ENCODE measurements at regions of chr3 and their contacts with region 1.

Region 1: DNA sequence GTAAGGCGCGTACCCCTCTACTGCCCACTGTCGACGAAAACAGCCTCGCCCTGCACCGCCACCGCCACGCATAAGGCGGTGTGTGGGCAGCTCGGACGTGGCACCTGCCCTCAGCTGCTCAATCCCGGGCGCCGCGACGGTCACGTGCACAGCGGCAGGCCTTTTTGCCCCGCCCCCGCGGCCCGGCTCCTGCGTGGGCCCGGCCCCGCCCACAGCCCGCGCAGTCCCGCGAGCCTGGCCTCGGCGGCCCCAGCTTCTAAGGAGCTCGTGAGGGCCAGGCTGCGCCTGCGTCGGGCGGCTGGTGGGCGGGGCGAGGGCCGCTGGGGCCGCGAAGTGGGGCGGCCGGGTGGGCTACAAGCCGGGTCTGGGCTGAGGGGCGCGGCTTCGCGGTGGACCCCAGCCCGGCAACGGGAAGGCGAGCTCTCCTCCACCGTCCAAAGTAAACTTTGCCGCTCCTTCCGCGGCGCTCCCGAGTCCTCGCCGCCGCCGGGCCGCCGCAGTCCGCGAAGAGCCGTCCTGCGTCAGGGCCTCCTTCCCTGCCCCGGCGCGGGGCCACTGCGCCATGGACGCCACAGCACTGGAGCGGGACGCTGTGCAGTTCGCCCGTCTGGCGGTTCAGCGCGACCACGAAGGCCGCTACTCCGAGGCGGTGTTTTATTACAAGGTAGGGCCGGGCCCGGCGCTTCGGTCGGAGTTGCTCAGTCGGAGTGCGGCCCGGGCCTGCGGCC is at the start of gene CAPN7:
- DNase-seq: peak; percentile 90 to 96
- ATAC-seq: peak; percentile 83 to 84
- H3K4me3 ChIP-seq: peak within 1 kb of the TSS; percentile 81 to 93 (median 88)
- H3K27ac ChIP-seq: peak within 1 kb of the TSS; percentile 97 to 99 (median 98)
- H3K4me1 ChIP-seq: peaks cover 15 to 23% of the 10 kb centered on the region in 2 donors
- H3K27me3 ChIP-seq: no peaks in the 10 kb centered on the region
- CTCF ChIP-seq: peak; percentile 27 to 66 (median 60)
- POLR2A ChIP-seq: peak; percentile 99
- total RNA-seq, gene CAPN7: 33.8 to 153 (median 69.7) TPM

Region 2: DNA sequence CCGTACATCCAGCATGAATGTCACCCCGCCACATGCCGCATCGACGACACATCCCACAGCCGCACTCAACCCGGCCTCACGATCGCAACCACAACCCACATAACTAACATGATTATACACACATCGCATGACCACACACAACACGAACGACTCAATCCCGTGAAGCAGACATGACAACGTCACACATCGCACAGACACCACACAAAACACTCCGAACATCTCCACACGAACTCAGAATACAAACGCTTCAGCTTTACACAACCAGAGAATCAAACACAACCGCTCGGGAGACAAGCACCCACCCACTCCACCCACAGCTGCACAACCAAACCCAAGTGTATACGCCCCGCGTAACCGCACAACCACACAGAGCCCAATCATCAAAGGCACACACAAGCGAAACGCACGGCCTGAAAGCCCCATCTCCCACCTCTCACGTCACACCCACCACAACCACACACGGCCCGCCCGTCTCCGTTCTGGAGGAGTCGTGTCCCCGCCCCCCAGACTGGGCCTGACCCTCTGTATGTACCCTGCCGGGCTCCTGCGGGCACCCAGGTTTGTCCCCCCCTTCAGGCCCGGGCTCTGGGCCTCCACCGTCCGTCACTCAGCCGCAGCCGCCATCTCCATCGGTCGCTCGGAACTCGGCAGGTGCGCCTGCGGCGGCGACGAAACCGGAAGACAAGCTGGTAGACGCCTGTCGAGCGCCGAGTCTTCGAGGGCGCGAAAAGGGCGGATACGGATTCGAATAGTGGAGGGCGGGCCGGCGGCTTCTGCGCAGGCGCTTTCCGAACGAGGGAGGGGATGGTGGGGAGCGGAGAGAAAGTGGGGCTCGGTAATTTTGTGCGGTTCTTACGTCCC is 107.4 kb before region 1 on chr3 and contains the start of gene RBSN:
- in situ Hi-C with region 1: no loop called
- intact Hi-C with region 1: loop called (anchors 1 kb)
- DNase-seq: peak; percentile 92 to 93
- ATAC-seq: peak; percentile 55 to 69
- H3K4me3 ChIP-seq: peak within 1 kb of the TSS; percentile 62 to 99 (median 93)
- H3K27ac ChIP-seq: peak within 1 kb of the TSS; percentile 87 to 96 (median 88)
- H3K4me1 ChIP-seq: peaks cover 36 to 40% of the 10 kb centered on the region in 2 donors
- H3K27me3 ChIP-seq: no peaks in the 10 kb centered on the region
- CTCF ChIP-seq: no peak
- POLR2A ChIP-seq: peak; percentile 86 to 94
- total RNA-seq, gene RBSN: 26.8 to 42.6 (median 28.6) TPM

Region 3: DNA sequence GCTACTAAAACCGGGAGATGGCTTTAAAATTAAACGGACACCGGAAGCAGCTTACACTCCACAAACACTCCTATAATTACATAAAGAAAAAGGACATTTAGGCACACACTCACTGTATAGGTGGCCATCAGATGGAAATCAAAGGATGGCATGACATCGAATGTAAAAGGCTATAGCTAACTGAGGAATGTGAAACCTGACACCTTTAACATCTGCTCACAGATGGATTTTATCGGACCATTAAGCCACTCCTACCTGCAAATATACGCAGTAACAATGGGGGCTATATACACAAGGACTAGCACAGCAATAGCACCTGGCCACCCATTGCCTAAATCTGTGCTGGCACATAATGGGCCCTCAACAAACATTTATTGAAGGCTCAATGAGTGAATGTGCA is 92.6 kb before region 1 on chr3:
- in situ Hi-C with region 1: loop called in 2 of 4 experiments (anchors 5 kb)
- intact Hi-C with region 1: no loop called
- DNase-seq: no peak
- ATAC-seq: no peak
- H3K4me3 ChIP-seq: no peak overlapping the region
- H3K27ac ChIP-seq: no peak overlapping the region
- H3K4me1 ChIP-seq: peaks cover 4 to 8% of the 10 kb centered on the region in 2 donors
- H3K27me3 ChIP-seq: no peaks in the 10 kb centered on the region
- CTCF ChIP-seq: no peak
- POLR2A ChIP-seq: no peak

Region 4: GRCh38 chr3:15332405-15333098 is 126.5 kb after region 1 on chr3 and contains the start of gene SH3BP5:
- in situ Hi-C with region 1: no loop called
- intact Hi-C with region 1: loop called (anchors 2 kb)
- DNase-seq: peak; percentile 52 to 66
- ATAC-seq: peak; percentile 63 to 66
- H3K4me3 ChIP-seq: peak within 1 kb of the TSS; percentile 92 to 97 (median 93)
- H3K27ac ChIP-seq: peak within 1 kb of the TSS; percentile 88 to 93 (median 91)
- H3K4me1 ChIP-seq: peaks cover 38 to 40% of the 10 kb centered on the region in 2 donors
- H3K27me3 ChIP-seq: no peaks in the 10 kb centered on the region
- CTCF ChIP-seq: peak; percentile 73 to 95 (median 91)
- POLR2A ChIP-seq: peak; percentile 89 to 91
- total RNA-seq, gene SH3BP5: 31.5 to 111 (median 75.5) TPM

Region 5: GRCh38 chr3:15405448-15406050 is 199.5 kb after region 1 on chr3:
- in situ Hi-C with region 1: loop called in 3 of 4 experiments (anchors 5 to 10 kb)
- intact Hi-C with region 1: loop called (anchors 1 kb)
- DNase-seq: no peak
- ATAC-seq: peak; percentile 49 to 70
- H3K4me3 ChIP-seq: no peak overlapping the region
- H3K27ac ChIP-seq: no peak overlapping the region
- H3K4me1 ChIP-seq: no peaks in the 10 kb centered on the region
- H3K27me3 ChIP-seq: no peaks in the 10 kb centered on the region
- CTCF ChIP-seq: peak; percentile 29 to 66 (median 44)
- POLR2A ChIP-seq: no peak

Region 6: DNA sequence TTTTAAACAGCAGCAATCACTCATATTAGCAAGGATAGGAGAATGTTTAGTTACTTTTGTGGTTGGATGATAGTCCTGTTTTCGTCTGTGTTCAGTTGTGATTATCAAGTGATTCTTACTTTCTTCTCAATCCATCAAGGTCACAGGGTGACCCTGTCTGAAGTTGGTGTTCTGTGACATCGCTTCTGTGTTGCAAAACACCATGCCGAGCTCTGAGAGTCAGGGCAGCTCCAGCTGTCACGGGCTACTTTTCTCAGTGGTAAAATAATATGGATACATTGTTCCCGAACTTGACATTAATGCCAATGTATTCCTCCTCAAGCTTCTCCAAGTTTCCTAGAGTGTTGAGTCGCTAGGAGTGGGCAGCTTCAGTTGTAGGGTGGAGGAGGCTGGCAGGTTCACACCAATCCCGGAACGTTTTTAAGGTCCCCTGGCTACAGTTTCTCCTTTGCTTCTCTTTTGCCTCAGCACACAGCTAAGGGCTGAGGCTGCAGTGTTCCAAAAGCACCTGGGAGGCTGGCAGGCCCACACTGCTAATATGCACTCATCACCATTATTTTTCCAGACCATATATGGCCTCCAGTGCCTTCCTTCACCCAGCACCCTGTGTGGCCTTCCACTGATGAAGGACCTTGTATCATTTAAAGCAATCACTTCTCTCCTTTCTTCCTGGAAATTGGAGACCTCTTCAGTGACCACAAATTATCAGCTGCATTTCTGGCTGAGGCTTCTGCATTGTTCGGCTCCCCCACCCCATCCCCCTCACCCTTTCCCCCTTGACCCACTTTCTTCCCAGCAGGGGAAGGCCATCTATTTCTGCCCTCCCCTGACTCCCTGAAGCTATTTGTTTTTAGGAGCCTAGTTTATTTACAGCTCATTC is 289.6 kb after region 1 on chr3:
- in situ Hi-C with region 1: no loop called
- intact Hi-C with region 1: loop called (anchors 2 kb)
- DNase-seq: peak in 1 of 2 donors; percentile 46
- ATAC-seq: peak; percentile 46
- H3K4me3 ChIP-seq: peak overlapping the region; percentile 9 to 24 (median 10)
- H3K27ac ChIP-seq: peak overlapping the region; percentile 81 to 88 (median 85)
- H3K4me1 ChIP-seq: peaks cover 63 to 64% of the 10 kb centered on the region in 2 donors
- H3K27me3 ChIP-seq: no peaks in the 10 kb centered on the region
- CTCF ChIP-seq: no peak
- POLR2A ChIP-seq: no peak

Region 7: GRCh38 chr3:15851735-15852134 is 645.6 kb after region 1 on chr3:
- in situ Hi-C with region 1: no loop called
- intact Hi-C with region 1: no loop called
- DNase-seq: no peak
- ATAC-seq: no peak
- H3K4me3 ChIP-seq: no peak overlapping the region
- H3K27ac ChIP-seq: no peak overlapping the region
- H3K4me1 ChIP-seq: peaks cover 16 to 19% of the 10 kb centered on the region in 2 donors
- H3K27me3 ChIP-seq: no peaks in the 10 kb centered on the region
- CTCF ChIP-seq: no peak
- POLR2A ChIP-seq: no peak

Measured in gastrocnemius medialis (tissue), 4 donors.